Panc1 (cell line): ENCODE measurements at regions of chr7 and their contacts with region 1.

Region 1: GRCh38 chr7:69889338-69889975 is 291.2 kb downstream of the AUTS2 start:
- DNase-seq: no peak
- ATAC-seq: no peak
- H3K4me3 ChIP-seq: no peak overlapping the region
- H3K27ac ChIP-seq: no peak overlapping the region
- H3K4me1 ChIP-seq: no peaks in the 10 kb centered on the region
- H3K27me3 ChIP-seq: no peaks in the 10 kb centered on the region
- CTCF ChIP-seq: no peak

Region 2: DNA sequence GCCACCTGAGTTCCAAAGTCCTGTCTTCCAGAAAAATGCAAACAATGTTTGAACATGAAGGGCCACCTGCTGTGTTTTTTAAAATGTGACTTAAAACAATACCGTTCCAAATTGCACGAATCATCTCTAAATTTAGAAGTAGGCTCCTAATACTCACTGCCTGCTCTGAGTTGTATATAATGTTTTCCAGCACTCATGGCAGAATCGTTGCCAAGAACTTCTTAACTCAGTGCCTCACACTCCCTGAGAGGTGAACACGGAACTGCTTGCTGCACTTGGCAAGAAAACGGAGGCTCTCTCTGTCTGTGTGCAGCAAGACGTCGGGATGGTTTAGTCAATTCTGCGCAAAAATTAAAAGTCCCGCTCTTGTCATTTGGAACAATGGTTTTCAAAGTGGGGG is 1048.5 kb before region 1 on chr7:
- CTCF ChIA-PET with region 1: no interaction called
- POLR2A ChIA-PET with region 1: interaction called, 11 read pairs
- in situ Hi-C with region 1: no loop called
- intact Hi-C with region 1: no loop called
- DNase-seq: no peak
- ATAC-seq: no peak
- H3K4me3 ChIP-seq: no peak overlapping the region
- H3K27ac ChIP-seq: no peak overlapping the region
- H3K4me1 ChIP-seq: no peaks in the 10 kb centered on the region
- H3K27me3 ChIP-seq: no peaks in the 10 kb centered on the region
- CTCF ChIP-seq: no peak

Region 3: DNA sequence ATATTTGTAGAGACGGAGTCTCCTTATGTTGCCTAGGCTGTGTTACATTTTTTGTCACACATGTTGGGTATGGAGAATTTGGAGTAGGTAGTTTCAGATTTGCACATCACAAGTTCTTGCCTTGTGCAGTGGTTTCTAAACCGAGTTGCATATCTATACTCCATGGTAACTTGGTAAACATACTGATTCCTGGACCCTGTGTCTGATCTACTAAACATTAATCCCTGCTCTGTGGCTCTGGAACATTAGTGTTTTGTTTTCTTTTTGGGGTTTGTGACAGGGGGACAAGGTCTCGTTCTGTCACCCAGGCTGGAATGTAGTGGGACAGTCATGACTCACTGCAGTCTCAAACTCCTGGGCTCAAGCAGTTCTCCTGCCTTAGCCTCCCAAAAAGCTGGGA is 266.5 kb before region 1 on chr7:
- CTCF ChIA-PET with region 1: no interaction called
- POLR2A ChIA-PET with region 1: no interaction called
- in situ Hi-C with region 1: no loop called
- intact Hi-C with region 1: no loop called
- DNase-seq: no peak
- ATAC-seq: no peak
- H3K4me3 ChIP-seq: no peak overlapping the region
- H3K27ac ChIP-seq: no peak overlapping the region
- H3K4me1 ChIP-seq: no peaks in the 10 kb centered on the region
- H3K27me3 ChIP-seq: no peaks in the 10 kb centered on the region
- CTCF ChIP-seq: no peak

Region 4: DNA sequence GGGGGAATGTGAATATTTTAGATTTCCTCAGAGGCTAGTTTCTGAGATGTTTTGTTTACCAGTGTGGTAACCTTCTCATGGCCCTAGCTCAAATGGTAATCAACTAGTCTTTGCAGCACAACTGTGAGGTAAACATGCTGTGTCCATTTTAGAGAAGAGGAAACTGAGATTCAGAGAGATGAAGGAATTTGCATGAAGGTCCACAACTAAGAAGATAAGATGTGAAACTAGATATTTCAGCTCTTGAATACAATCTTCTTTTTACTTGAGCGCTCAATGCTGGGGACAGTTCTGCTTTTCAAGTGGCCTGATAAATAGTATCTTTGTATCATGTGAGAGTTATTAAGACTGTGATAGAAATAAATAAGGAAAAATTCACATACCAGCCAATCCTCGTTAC is 45.8 kb before region 1 on chr7:
- CTCF ChIA-PET with region 1: no interaction called
- POLR2A ChIA-PET with region 1: no interaction called
- in situ Hi-C with region 1: no loop called
- intact Hi-C with region 1: no loop called
- DNase-seq: no peak
- ATAC-seq: no peak
- H3K4me3 ChIP-seq: no peak overlapping the region
- H3K27ac ChIP-seq: no peak overlapping the region
- H3K4me1 ChIP-seq: no peaks in the 10 kb centered on the region
- H3K27me3 ChIP-seq: no peaks in the 10 kb centered on the region; the same call in 1 of the 2 replicates
- CTCF ChIP-seq: no peak

Region 5: GRCh38 chr7:69994886-69995542 is 105.6 kb after region 1 on chr7:
- CTCF ChIA-PET with region 1: no interaction called
- POLR2A ChIA-PET with region 1: no interaction called
- in situ Hi-C with region 1: no loop called
- intact Hi-C with region 1: no loop called
- DNase-seq: no peak
- ATAC-seq: no peak
- H3K4me3 ChIP-seq: no peak overlapping the region
- H3K27ac ChIP-seq: no peak overlapping the region
- H3K4me1 ChIP-seq: no peaks in the 10 kb centered on the region
- H3K27me3 ChIP-seq: no peaks in the 10 kb centered on the region
- CTCF ChIP-seq: no peak